Colonic mucosa (tissue), 4 donors: ENCODE measurements at regions of chr20 and their contacts with region 1.

Region 1: DNA sequence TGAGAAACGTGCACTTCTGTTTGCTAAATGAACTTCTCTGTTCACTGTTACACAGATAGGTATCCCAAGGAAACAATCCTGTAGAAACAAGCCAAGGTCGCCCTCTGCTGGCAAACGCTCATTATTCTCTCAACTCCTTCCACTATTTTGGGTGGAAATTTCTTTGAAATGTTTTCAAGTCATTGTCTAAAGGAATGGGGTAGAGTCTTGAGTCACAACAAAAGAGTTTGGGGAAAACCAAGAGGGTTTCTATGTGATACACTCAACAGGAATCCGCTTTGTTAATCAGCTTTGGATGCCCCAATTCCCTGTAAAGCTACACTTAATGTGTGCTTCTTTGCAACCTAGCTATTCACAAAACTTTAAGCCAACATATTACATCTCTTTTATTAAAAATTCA is 4.6 kb upstream of the RAE1 start:
- DNase-seq: peak; percentile 81
- H3K4me3 ChIP-seq: no peak overlapping the region
- H3K27ac ChIP-seq: no peak overlapping the region
- H3K4me1 ChIP-seq: no peaks in the 10 kb centered on the region
- H3K27me3 ChIP-seq: no peaks in the 10 kb centered on the region
- CTCF ChIP-seq: peak; percentile 55

Region 2: GRCh38 chr20:57089691-57090150 is 256.8 kb before region 1 on chr20:
- intact Hi-C with region 1: loop called (anchors 2 kb)
- DNase-seq: peak; percentile 83
- H3K4me3 ChIP-seq: no peak overlapping the region
- H3K27ac ChIP-seq: no peak overlapping the region
- H3K4me1 ChIP-seq: no peaks in the 10 kb centered on the region
- H3K27me3 ChIP-seq: no peaks in the 10 kb centered on the region
- CTCF ChIP-seq: peak; percentile 96

Region 3: GRCh38 chr20:57570145-57570850 is 223.8 kb after region 1 on chr20:
- intact Hi-C with region 1: no loop called
- DNase-seq: no peak
- H3K4me3 ChIP-seq: no peak overlapping the region
- H3K27ac ChIP-seq: peak overlapping the region; percentile 61
- H3K4me1 ChIP-seq: peaks cover 19% of the 10 kb centered on the region
- H3K27me3 ChIP-seq: no peaks in the 10 kb centered on the region
- CTCF ChIP-seq: no peak